HCT116 (cell line): ENCODE measurements at regions of chr9 and their contacts with region 1.

Region 1: GRCh38 chr9:35732122-35732799 is at the starts of genes CREB3 and TLN1:
- DNase-seq: peak; percentile 97
- ATAC-seq: peak; percentile 85
- H3K4me3 ChIP-seq: peak within 1 kb of the TSS; percentile 92 to 94
- H3K27ac ChIP-seq: peak within 1 kb of the TSS; percentile 90
- H3K4me1 ChIP-seq: peaks cover 22 to 37% of the 10 kb centered on the region in 2 experiments
- H3K27me3 ChIP-seq: no peaks in the 10 kb centered on the region
- CTCF ChIP-seq: no peak
- POLR2A ChIP-seq: peak; percentile 61
- RAD21 ChIP-seq: no peak
- total RNA-seq, gene CREB3: 22.3 TPM
- total RNA-seq, gene TLN1: 144 TPM

Region 2: DNA sequence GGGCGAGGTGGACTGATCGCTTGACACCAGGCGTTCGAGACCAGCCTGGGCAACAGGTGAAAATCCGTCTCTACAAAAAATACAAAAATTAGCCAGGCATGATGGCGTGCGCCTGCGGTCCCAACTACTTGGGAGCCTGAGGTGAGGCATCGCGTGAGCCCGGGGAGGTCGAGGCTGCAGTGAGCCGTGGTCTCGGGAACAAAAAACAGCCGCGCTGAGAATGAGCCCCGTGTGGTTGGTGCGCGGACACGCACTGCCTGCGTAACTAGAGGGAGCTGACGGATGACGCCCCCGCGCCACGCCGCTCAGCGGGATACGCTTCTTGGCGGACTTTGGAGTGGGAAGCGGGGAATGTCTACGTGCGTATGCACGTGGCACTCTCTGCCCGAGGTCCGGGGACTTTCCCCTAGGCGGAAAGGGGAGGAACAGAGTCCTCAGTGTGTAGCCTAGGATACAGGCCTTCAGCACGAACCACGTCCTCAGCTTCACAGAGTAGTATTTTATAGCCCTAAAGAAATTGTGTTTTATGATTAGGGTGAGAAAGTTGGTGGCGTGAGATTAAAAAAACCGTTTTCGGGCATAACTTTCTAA is 74.6 kb before region 1 on chr9 and contains the start of gene RMRP:
- CTCF ChIA-PET with region 1: interaction called, 20 read pairs
- POLR2A ChIA-PET with region 1: interaction called, 11 read pairs
- RAD21 ChIA-PET with region 1: no interaction called
- intact Hi-C with region 1: loop called (anchors 1 kb)
- DNase-seq: peak; percentile 99
- ATAC-seq: peak; percentile 89
- H3K4me3 ChIP-seq: peak within 1 kb of the TSS; percentile 68 to 75
- H3K27ac ChIP-seq: peak within 1 kb of the TSS; percentile 85
- H3K4me1 ChIP-seq: peaks cover 10 to 34% of the 10 kb centered on the region in 2 experiments; a peak in 3 of 4 replicates
- H3K27me3 ChIP-seq: no peaks in the 10 kb centered on the region
- CTCF ChIP-seq: no peak
- POLR2A ChIP-seq: no peak
- RAD21 ChIP-seq: no peak
- total RNA-seq, gene RMRP: 30,969 TPM

Region 3: GRCh38 chr9:35690431-35691333 is 41.6 kb before region 1 on chr9:
- CTCF ChIA-PET with region 1: interaction called, 21 read pairs
- POLR2A ChIA-PET with region 1: interaction called, 6 read pairs
- RAD21 ChIA-PET with region 1: interaction called in 1 of 2 experiments, 3 read pairs
- intact Hi-C with region 1: loop called (anchors 5 kb)
- DNase-seq: no peak
- ATAC-seq: peak; percentile 64
- H3K4me3 ChIP-seq: peak overlapping the region; percentile 83 to 90
- H3K27ac ChIP-seq: peak overlapping the region; percentile 97
- H3K4me1 ChIP-seq: peaks cover 18 to 30% of the 10 kb centered on the region in 2 experiments
- H3K27me3 ChIP-seq: no peaks in the 10 kb centered on the region
- CTCF ChIP-seq: no peak
- POLR2A ChIP-seq: no peak
- RAD21 ChIP-seq: no peak

Region 4: GRCh38 chr9:35696525-35697215 is 35.6 kb before region 1 on chr9:
- CTCF ChIA-PET with region 1: interaction called, 21 read pairs
- POLR2A ChIA-PET with region 1: interaction called, 6 read pairs
- RAD21 ChIA-PET with region 1: interaction called in 1 of 2 experiments, 3 read pairs
- intact Hi-C with region 1: loop called (anchors 5 kb)
- DNase-seq: peak; percentile 37
- ATAC-seq: peak; percentile 94
- H3K4me3 ChIP-seq: no peak overlapping the region
- H3K27ac ChIP-seq: peak overlapping the region; percentile 2; the same call in 1 of the 2 replicates
- H3K4me1 ChIP-seq: peaks cover under 1 to 4% of the 10 kb centered on the region in 2 experiments; a peak in 2 of 4 replicates
- H3K27me3 ChIP-seq: no peaks in the 10 kb centered on the region
- CTCF ChIP-seq: peak in 2 of 3 experiments; percentile 96 to 97; a peak in 4 of 6 replicates
- POLR2A ChIP-seq: no peak
- RAD21 ChIP-seq: no peak

Region 5: DNA sequence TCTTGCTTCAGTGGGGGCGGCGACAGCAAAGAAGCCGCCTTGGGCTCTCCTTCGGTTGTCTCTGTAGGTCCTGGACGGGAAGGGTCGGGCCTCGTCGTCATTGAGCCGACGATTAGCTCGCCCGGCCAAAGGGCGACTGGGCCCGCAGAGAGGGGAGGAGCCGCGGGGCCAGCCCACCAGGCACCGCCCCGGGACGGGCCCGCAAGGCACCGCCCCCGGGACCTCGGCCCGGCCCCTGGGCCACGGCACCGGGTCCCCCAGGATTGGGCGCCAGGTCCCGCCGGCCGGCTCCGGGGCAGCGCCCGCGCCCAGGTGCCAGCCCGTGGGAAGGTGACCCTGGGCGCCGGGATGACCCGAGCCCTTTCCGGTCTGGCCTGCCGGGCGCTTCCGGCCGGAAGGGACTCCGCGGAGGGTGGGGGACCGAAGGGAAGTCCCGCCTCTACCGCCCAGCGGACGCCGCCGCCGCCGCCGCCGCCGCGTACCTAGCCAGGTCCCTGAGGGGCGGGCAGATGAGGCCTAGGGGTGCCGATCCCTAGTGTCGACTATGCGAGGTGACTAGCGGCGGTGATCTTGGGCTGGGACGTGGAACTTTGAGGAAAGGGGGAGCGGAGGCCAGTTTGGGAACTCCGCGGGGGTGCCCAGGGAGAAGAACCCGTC is 16.7 kb after region 1 on chr9 and contains the starts of genes GBA2 and RGP1:
- CTCF ChIA-PET with region 1: interaction called, 15 read pairs
- POLR2A ChIA-PET with region 1: interaction called, 23 read pairs
- RAD21 ChIA-PET with region 1: no interaction called
- intact Hi-C with region 1: loop called (anchors 1 kb)
- DNase-seq: peak; percentile 42
- ATAC-seq: peak; percentile 87
- H3K4me3 ChIP-seq: peak within 1 kb of the TSS; percentile 89 to 92
- H3K27ac ChIP-seq: peak within 1 kb of the TSS; percentile 98
- H3K4me1 ChIP-seq: peaks cover 21 to 25% of the 10 kb centered on the region in 2 experiments
- H3K27me3 ChIP-seq: no peaks in the 10 kb centered on the region
- CTCF ChIP-seq: no peak
- POLR2A ChIP-seq: no peak
- RAD21 ChIP-seq: no peak
- total RNA-seq, gene GBA2: 63.6 TPM
- total RNA-seq, gene RGP1: 32.6 TPM

Region 6: DNA sequence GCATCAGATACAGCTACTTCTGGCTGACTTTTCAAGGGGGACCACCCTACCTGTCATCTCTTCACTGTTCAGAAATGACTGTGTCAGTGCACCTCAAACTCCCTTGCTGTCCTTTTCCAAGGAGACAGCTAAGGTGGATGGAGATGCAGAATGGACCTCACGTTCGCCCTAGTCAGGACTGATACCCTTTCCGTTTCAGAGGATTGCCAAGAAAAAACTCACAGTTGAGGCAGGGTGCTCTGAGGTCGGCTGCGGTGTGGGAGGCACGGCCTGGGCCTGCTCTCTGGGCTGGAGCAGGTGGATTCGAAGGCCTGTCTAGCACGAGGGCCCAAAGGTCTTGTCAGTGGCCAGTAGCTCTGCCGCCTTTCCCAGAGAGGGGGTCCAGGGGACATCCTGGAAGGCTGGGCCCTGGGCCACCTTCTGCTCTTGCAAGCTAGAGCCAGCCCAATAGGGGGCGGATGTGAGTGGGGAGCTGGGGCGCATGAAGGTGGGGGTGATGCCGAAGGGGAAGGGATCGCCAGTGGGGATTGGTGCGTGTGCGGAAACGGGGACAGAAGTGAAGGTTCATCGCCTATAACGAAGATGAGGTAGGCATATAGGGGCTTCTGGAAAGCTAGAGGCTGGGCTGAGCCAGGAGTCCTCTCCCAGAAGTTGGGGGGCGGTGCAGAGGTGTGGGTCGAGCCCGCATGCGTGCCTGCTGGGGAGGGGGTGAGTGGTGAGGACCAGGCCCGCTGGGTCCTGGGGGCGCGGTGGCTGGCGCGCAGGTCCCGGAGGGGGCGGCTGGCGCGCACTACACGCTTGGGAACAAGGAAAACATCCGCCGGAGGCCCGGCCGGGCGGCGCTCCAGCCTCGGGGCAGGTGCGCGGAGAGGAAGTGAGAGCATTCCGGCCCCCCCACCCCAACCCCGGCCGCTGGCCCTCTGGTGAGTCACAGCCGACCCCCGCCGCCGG is 24.3 kb after region 1 on chr9:
- CTCF ChIA-PET with region 1: interaction called, 10 read pairs
- POLR2A ChIA-PET with region 1: interaction called, 4 read pairs
- RAD21 ChIA-PET with region 1: no interaction called
- intact Hi-C with region 1: no loop called
- DNase-seq: peak; percentile 58
- ATAC-seq: peak; percentile 84
- H3K4me3 ChIP-seq: peak overlapping the region; percentile 81 to 83
- H3K27ac ChIP-seq: peak overlapping the region; percentile 88
- H3K4me1 ChIP-seq: peaks cover 10 to 25% of the 10 kb centered on the region in 2 experiments; a peak in 3 of 4 replicates
- H3K27me3 ChIP-seq: no peaks in the 10 kb centered on the region
- CTCF ChIP-seq: peak in 2 of 3 experiments; percentile 79 to 82; a peak in 4 of 6 replicates
- POLR2A ChIP-seq: no peak
- RAD21 ChIP-seq: no peak